GM12878 (cell line): ENCODE measurements at regions of chr21 and their contacts with region 1.

Region 1: DNA sequence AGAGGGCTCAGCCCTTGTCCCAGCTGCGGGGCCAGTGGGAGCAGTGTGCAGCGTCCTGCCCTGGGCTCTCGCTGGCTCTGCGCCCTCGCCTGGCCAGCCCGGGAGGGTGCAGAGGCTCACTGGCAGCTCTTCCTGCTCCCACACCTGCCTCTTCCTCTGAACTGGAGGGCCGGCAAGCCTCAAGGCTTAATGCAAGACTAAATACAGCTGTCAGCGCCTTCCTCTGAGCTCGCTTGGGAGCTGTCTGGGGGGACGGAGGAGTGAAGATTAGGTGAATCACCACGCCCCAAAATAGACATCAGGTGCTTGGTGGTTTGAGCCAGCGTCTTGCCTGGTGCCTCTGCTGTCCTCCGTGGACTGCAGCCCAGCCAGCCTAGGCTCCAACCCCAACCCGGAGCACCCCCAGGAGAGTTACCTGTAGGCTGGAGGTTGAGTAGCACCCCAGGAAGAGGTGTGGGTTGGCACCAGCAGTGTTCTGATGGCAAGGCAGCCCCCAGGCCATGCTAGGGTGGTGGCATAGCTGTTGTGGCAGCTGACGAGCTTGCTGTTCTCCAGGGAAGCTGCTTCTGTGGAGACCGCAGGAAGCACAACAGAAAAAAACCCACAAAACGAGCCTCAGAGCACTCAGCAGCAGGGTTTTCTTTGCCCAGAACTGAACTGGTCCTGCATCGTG is 36.9 kb downstream of the UMODL1 start:
- DNase-seq: no peak
- ATAC-seq: peak; percentile 98
- H3K4me3 ChIP-seq: no peak overlapping the region
- H3K27ac ChIP-seq: no peak overlapping the region
- H3K4me1 ChIP-seq: peaks cover 12% of the 10 kb centered on the region
- H3K27me3 ChIP-seq: peaks cover 1 to 2% of the 10 kb centered on the region in 2 experiments; a peak in 2 of 4 replicates
- CTCF ChIP-seq: peak; percentile 62 to 83 (median 77)
- EP300 ChIP-seq: no peak
- POLR2A ChIP-seq: no peak
- RAD21 ChIP-seq: peak; percentile 53

Region 2: GRCh38 chr21:41612674-41613532 is 495.1 kb before region 1 on chr21:
- CTCF ChIA-PET with region 1: interaction called, 13 read pairs
- POLR2A ChIA-PET with region 1: no interaction called
- RAD21 ChIA-PET with region 1: no interaction called
- SMC1A ChIA-PET with region 1: no interaction called
- in situ Hi-C with region 1: loop called (anchors 5 kb)
- intact Hi-C with region 1: no loop called
- DNase-seq: no peak
- ATAC-seq: peak; percentile 77
- H3K4me3 ChIP-seq: no peak overlapping the region
- H3K27ac ChIP-seq: no peak overlapping the region
- H3K4me1 ChIP-seq: no peaks in the 10 kb centered on the region
- H3K27me3 ChIP-seq: no peaks in the 10 kb centered on the region
- CTCF ChIP-seq: peak; percentile 47 to 68 (median 56)
- EP300 ChIP-seq: no peak
- POLR2A ChIP-seq: no peak
- RAD21 ChIP-seq: peak; percentile 49

Region 3: GRCh38 chr21:41879190-41879998 is 228.6 kb before region 1 on chr21 and contains the start of gene PRDM15:
- CTCF ChIA-PET with region 1: interaction called, 14 read pairs
- POLR2A ChIA-PET with region 1: interaction called, 3 read pairs
- RAD21 ChIA-PET with region 1: interaction called, 7 read pairs
- SMC1A ChIA-PET with region 1: interaction called, 3 read pairs
- in situ Hi-C with region 1: no loop called
- intact Hi-C with region 1: no loop called
- DNase-seq: no peak
- ATAC-seq: peak; percentile 68
- H3K4me3 ChIP-seq: peak within 1 kb of the TSS; percentile 94
- H3K27ac ChIP-seq: peak within 1 kb of the TSS; percentile 86
- H3K4me1 ChIP-seq: peaks cover 13% of the 10 kb centered on the region
- H3K27me3 ChIP-seq: no peaks in the 10 kb centered on the region
- CTCF ChIP-seq: no peak
- EP300 ChIP-seq: no peak
- POLR2A ChIP-seq: peak; percentile 82
- RAD21 ChIP-seq: no peak
- polyA plus RNA-seq, gene PRDM15: 2.2 to 2.8 TPM

Region 4: DNA sequence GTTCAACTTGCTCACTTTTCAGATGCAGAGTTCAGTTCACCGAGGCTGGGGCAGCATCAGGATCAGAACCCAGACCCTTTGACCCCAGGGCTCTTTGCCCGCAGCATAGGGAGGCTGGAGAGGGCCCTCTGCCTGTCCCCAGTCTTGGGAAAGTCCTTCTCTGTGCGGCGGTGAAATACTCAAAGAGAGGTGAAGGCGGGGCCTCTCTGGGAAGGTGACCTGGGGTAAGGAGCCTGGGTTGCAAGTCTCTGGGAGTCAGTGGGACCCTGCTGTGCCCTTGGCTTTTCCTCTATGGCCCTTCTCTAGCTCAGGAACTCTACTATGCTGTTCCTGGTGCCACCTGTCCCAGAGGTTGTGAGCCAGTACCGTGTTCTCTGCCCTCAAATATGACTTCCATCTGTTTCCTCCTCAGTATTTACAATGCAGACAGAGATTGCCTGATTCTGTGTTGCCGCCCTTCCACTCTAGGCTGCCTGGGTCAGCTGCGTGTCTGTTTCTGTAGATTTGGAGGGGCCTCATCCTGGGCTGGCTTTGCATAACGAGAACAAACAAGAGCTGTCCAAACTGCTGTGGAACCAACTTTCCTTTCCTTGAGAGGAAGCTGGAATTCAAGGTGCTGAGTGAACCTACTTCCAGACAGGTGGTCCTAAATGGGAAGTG is 79.1 kb before region 1 on chr21:
- CTCF ChIA-PET with region 1: interaction called, 3 read pairs
- POLR2A ChIA-PET with region 1: interaction called, 12 read pairs
- RAD21 ChIA-PET with region 1: no interaction called
- SMC1A ChIA-PET with region 1: interaction called, 8 read pairs
- in situ Hi-C with region 1: no loop called
- intact Hi-C with region 1: no loop called
- DNase-seq: no peak
- ATAC-seq: no peak
- H3K4me3 ChIP-seq: no peak overlapping the region
- H3K27ac ChIP-seq: no peak overlapping the region
- H3K4me1 ChIP-seq: peaks cover 13% of the 10 kb centered on the region
- H3K27me3 ChIP-seq: no peaks in the 10 kb centered on the region; a peak in 1 of 4 replicates
- CTCF ChIP-seq: no peak
- EP300 ChIP-seq: no peak
- POLR2A ChIP-seq: no peak
- RAD21 ChIP-seq: no peak

Region 5: DNA sequence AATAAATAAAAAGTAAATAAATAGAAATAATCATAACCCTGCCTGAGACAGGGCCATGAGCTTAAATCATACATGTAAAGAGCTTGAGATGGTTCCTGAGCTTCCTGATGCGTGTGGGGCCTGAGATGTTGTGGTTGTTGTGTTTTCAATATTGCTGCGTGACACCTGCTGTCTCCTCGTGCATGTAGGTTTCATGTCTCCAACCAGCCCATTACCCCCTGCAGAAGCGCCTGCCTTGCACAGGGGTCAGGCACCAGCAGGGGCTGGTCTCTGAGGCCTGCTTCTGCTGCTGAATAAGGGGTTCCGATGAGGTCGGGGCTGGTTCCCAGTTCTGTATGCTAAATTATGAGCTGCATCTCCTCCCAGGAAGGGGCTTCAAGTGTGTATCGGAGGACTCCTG is 21.0 kb before region 1 on chr21:
- CTCF ChIA-PET with region 1: interaction called, 4 read pairs
- POLR2A ChIA-PET with region 1: no interaction called
- RAD21 ChIA-PET with region 1: no interaction called
- SMC1A ChIA-PET with region 1: interaction called, 11 read pairs
- in situ Hi-C with region 1: no loop called
- intact Hi-C with region 1: no loop called
- DNase-seq: no peak
- ATAC-seq: peak; percentile 49; the same call in 2 of the 3 replicates
- H3K4me3 ChIP-seq: no peak overlapping the region
- H3K27ac ChIP-seq: no peak overlapping the region
- H3K4me1 ChIP-seq: peaks cover 4% of the 10 kb centered on the region
- H3K27me3 ChIP-seq: no peaks in the 10 kb centered on the region; a peak in 1 of 4 replicates
- CTCF ChIP-seq: no peak
- EP300 ChIP-seq: no peak
- POLR2A ChIP-seq: no peak
- RAD21 ChIP-seq: no peak

Region 6: GRCh38 chr21:42340187-42341050 is 232.4 kb after region 1 on chr21:
- CTCF ChIA-PET with region 1: no interaction called
- POLR2A ChIA-PET with region 1: no interaction called
- RAD21 ChIA-PET with region 1: no interaction called
- SMC1A ChIA-PET with region 1: no interaction called
- in situ Hi-C with region 1: no loop called
- intact Hi-C with region 1: no loop called
- DNase-seq: no peak
- ATAC-seq: peak; percentile 59
- H3K4me3 ChIP-seq: no peak overlapping the region
- H3K27ac ChIP-seq: no peak overlapping the region
- H3K4me1 ChIP-seq: peaks cover 13% of the 10 kb centered on the region
- H3K27me3 ChIP-seq: no peaks in the 10 kb centered on the region
- CTCF ChIP-seq: no peak
- EP300 ChIP-seq: no peak
- POLR2A ChIP-seq: no peak
- RAD21 ChIP-seq: no peak